ENCODE measurements at regions of chr13 and their contacts with region 1.

Region 1: DNA sequence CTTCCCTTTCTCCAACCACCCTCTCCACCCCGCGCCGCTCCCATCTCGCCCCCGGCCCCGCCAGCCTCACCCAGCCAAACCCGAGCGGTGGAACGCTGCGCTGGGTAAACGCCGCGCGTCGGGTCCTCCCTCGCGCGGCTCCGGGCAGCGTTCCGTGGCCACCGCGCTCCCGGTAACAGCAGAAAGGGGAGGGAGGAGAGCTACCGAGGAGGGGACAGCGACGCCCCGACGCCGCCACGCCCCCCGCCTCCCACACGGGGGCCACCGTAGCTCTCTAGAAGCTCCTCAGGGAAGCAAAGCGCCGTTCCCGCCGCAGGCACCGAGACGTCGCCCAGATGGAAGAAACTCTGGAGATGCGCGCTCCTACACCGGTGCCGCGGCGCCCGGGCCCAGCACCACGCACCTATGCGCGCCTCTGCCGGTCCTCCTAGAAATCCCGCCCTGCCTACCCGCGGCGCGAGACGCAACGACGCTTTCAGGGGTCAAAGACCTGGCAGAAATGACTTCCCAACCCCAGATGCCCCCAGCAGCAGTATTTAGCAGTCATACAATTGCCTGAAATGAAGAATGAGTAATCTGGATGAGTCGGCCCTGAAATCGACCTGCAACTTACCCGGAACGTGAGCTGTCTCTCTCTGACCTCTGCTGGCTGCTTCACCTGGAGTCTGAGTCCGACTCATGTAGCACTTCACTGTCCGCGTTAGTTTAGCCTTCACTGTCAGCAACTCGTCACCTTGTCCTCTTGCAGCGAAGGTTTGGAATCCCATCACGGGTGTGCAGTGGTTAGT is at the start of gene RUBCNL:
- DNase-seq: peak; percentile 67
- ATAC-seq: peak; percentile 83
- H3K4me3 Mint-ChIP-seq: peak within 1 kb of the TSS; percentile 74
- H3K27ac Mint-ChIP-seq: peak within 1 kb of the TSS; percentile 34
- H3K4me1 Mint-ChIP-seq: peaks cover 22% of the 10 kb centered on the region
- H3K27me3 Mint-ChIP-seq: peaks cover 35% of the 10 kb centered on the region
- total RNA-seq, gene RUBCNL: 1.0 to 1.1 TPM

Region 2: DNA sequence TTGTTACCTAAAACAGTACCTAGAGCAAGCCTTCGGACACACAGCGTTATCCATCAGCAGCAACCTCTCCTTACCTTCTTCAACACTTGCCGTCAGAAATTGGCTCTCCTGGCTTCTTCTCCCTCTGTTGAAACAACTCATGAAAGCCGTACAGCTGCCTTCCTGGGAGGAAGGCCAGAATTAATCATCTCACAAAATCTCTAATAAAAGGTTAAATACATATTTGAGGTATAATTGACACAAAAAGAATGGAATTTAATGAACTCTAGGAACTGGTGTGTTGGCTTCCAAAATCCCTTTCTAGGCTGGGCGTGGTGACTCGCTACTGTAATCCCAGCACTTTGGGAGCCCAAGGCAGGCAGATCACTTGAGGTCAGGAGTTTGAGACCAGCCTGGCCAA is 1304.3 kb before region 1 on chr13:
- CTCF ChIA-PET with region 1: no interaction called
- POLR2A ChIA-PET with region 1: no interaction called
- intact Hi-C with region 1: no loop called
- DNase-seq: no peak
- ATAC-seq: no peak
- H3K4me3 Mint-ChIP-seq: no peak overlapping the region
- H3K27ac Mint-ChIP-seq: no peak overlapping the region
- H3K4me1 Mint-ChIP-seq: no peaks in the 10 kb centered on the region
- H3K27me3 Mint-ChIP-seq: peaks cover 2% of the 10 kb centered on the region

Region 3: GRCh38 chr13:46341112-46341711 is 46.0 kb before region 1 on chr13:
- CTCF ChIA-PET with region 1: no interaction called
- POLR2A ChIA-PET with region 1: no interaction called
- intact Hi-C with region 1: loop called (anchors 2 to 5 kb)
- DNase-seq: peak; percentile 69
- ATAC-seq: peak; percentile 96
- H3K4me3 Mint-ChIP-seq: peak overlapping the region; percentile 67
- H3K27ac Mint-ChIP-seq: peak overlapping the region; percentile 95
- H3K4me1 Mint-ChIP-seq: peaks cover 45% of the 10 kb centered on the region
- H3K27me3 Mint-ChIP-seq: peaks cover 2% of the 10 kb centered on the region

Region 4: GRCh38 chr13:46516599-46517338 is 129.5 kb after region 1 on chr13:
- CTCF ChIA-PET with region 1: no interaction called
- POLR2A ChIA-PET with region 1: no interaction called
- intact Hi-C with region 1: no loop called
- DNase-seq: no peak
- ATAC-seq: no peak
- H3K4me3 Mint-ChIP-seq: no peak overlapping the region
- H3K27ac Mint-ChIP-seq: no peak overlapping the region
- H3K4me1 Mint-ChIP-seq: peaks cover 3% of the 10 kb centered on the region
- H3K27me3 Mint-ChIP-seq: peaks cover 4% of the 10 kb centered on the region